ENCODE measurements at regions of chr6 and their contacts with region 1.

Region 1: DNA sequence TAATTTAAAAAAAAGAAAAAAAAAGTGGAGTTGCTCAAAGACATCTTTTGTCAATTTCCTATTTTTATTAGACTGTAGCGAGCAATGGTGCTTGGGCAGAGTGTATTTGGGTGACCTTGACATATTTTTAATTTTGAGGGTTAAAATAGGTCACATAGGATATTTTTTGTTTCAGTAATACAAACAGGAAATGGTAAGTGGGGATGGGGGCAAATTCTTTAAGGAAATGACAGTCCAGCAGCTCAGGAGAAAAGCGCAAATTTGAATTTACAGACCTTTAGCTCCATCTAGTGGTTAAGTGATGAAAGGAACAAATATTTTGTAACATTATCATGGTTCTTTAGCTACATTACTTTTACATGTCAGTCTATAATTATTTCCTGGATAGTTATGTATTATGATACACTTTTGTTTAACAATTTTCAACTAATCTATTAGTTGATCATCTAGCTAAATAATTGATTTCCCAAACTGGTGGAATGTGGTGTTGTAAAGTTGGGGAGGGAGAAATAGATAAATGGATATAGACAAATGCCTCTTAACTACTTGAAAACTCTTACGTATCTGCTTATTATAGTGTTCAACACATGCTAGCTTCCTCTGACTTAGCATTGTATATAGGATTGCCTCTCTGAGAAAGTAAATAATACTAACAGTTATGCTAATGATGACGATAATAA is 10.0 kb downstream of the CITED2 start:
- DNase-seq: no peak
- H3K4me3 ChIP-seq: no peak overlapping the region
- H3K27ac ChIP-seq: no peak overlapping the region
- H3K27me3 ChIP-seq: no peaks in the 10 kb centered on the region
- CTCF ChIP-seq: peak; percentile 73 to 98 (median 86)

Region 2: GRCh38 chr6:138817822-138818308 is 546.6 kb before region 1 on chr6:
- intact Hi-C with region 1: loop called (anchors 5 kb)
- DNase-seq: no peak
- H3K4me3 ChIP-seq: no peak overlapping the region
- H3K27ac ChIP-seq: no peak overlapping the region
- H3K27me3 ChIP-seq: no peaks in the 10 kb centered on the region
- CTCF ChIP-seq: no peak

Region 3: DNA sequence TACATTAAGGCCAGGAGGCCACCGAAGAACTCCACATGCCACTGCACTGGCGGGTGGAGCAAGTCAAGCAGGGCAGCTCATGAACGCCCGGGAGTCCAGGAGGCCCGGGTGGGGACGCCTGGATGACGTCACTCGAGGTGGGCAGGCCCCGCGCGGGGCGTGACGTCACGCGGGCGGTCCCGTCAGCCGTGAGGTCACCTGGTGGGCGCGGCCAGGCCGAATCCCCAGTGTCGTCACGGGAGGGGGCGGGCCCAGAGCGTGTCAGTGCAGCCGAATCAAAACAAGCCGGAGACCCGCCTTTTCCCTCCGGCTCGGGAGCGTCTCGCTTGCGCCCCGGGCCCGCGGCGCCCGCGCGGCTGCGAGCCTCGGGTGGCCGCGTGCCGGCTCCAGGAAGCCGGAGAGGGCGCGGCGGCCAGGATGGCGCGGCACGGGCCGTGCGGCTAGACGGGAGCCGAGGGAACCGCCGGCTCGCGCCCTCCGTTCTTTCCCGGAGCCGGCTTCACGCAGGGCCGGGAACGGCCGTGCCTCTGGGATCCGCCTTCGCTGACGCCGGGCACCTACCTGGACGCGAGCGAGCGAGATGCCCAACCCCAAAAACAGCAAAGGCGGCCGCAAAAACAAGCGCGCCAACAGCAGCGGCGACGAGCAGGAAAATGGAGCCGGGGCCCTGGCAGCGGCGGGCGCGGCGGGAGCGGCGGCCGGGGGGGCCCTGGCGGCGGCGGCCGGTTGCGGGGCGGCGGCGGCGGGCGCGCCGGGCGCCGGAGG is 229.4 kb before region 1 on chr6 and contains the start of gene HECA:
- intact Hi-C with region 1: loop called in 1 of 2 experiments (anchors 5 kb)
- DNase-seq: peak; percentile 93 to 98 (median 97)
- H3K4me3 ChIP-seq: peak within 1 kb of the TSS; percentile 57 to 88 (median 79)
- H3K27ac ChIP-seq: peak within 1 kb of the TSS in 57 of 59 donors; percentile 45 to 97 (median 88)
- H3K27me3 ChIP-seq: no peaks in the 10 kb centered on the region
- CTCF ChIP-seq: peak in 2 of 56 donors; percentile 10 to 17
- total RNA-seq, gene HECA: 19.3 to 43.8 (median 30.8) TPM

Region 4: GRCh38 chr6:139219271-139219729 is 145.1 kb before region 1 on chr6:
- intact Hi-C with region 1: loop called (anchors 2 to 5 kb)
- DNase-seq: peak; percentile 27 to 90 (median 88)
- H3K4me3 ChIP-seq: peak overlapping the region in 16 of 59 donors; percentile 3 to 38 (median 17)
- H3K27ac ChIP-seq: peak overlapping the region in 50 of 59 donors; percentile 4 to 83 (median 59)
- H3K27me3 ChIP-seq: no peaks in the 10 kb centered on the region
- CTCF ChIP-seq: peak; percentile 47 to 89 (median 78)

Measured in dorsolateral prefrontal cortex (tissue), 120 donors.